Lower leg skin (tissue), 4 donors: ENCODE measurements at regions of chr4 and their contacts with region 1.

Region 1: DNA sequence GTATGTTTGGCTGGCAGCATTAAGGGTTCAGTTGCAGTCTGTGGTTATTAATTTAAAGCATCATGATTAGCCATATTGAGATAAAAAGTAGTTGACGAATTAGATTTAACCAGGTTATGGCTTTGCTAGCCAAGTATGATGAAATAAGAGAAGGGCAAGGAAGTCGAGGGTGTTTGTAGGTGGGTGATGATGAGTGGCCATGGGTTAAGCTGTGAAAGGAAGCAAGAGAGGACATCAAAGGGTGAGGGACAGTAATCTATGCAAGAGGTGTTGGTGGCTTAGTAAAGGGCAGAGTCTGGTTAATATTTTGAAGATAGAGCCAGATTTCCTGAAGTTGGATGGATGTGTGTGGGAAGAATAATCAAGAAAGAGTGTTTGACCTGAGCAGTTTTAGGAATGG is 44.5 kb downstream of the STIM2 start:
- DNase-seq: no peak
- H3K4me3 ChIP-seq: no peak overlapping the region
- CTCF ChIP-seq: no peak
- POLR2A ChIP-seq: no peak

Region 2: GRCh38 chr4:26943391-26943790 is 38.2 kb after region 1 on chr4:
- intact Hi-C with region 1: loop called (anchors 2 kb)
- DNase-seq: no peak
- H3K4me3 ChIP-seq: no peak overlapping the region
- CTCF ChIP-seq: no peak
- POLR2A ChIP-seq: no peak